Activated T-helper 2 cell treated with anti-CD3 and anti-CD28 coated beads, Interferon-gamma antibody, Interleukin-2, Interleukin-4, amounts not matched to agents 10 μg/mL and 5 μg/mL and 100 μg/mL, durations not matched to agents 14 hours and 24 hours and 36 hours (primary cell): ENCODE measurements at regions of chr5 and their contacts with region 1.

Region 1: DNA sequence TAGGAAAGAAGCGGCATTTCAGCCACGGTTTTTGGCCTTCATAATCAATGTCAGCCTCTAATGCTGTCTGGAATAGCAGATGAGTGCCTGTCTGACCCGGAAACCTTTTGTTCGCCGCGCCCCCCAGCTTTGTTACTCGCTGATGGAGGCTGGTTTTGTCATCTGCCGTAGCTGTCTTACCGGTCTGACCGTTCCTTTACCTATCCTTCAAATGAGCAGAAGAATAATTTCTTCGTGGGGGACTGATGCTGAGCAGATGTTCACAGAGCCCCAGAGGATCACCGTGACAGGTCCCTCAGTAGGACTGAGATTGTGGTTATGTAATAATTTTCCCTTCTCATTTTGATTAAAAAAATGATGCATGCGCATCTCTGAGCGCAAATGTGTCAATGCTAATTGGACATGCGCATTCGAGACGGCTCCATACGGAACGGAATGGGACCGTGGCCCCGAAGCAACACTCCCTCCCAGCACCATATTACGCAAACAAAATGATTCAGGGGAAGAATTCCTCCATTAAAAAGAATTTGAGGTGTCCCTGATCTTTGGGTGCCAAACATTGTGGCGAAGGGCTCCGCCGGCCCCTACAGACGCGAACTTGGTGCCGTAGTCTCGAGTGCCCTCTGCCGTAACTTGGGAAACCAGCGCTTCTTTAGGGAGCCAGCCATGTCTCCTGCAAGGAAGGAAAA is 27.6 kb downstream of the TLX3 start:
- DNase-seq: no peak
- H3K4me3 Mint-ChIP-seq: peak overlapping the region; percentile 10
- H3K27ac Mint-ChIP-seq: no peak overlapping the region
- H3K4me1 Mint-ChIP-seq: no peaks in the 10 kb centered on the region
- H3K27me3 Mint-ChIP-seq: peaks cover 40% of the 10 kb centered on the region

Region 2: DNA sequence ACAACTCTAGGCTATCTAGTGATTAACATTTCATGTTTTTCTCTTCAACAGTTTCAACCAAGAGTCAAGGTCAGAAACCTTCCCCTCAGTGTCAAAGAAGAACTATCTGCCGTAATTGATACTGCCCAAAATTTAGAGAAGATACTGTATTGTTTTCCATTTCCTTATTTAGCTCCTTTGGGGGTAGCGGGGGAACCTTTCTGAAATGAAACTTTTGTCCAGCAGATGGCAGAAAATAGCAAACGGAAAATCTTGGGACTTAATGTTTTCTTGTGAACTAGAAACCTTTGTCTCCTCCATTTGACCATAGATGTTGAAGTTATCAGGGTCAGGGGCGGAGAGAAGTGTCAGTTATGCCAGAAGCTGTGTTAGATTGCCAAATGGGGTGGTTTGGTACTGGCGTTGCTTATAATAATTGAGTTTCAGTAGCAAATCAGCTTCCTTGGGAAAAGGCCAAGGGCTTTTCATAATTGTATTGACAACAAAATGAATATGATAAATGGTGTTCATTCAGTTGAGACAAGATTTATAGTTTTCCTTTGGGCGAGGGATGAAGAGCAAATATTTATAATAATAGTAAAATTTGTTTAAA is 129.3 kb before region 1 on chr5:
- intact Hi-C with region 1: loop called (anchors 2 kb)
- DNase-seq: no peak
- H3K4me3 Mint-ChIP-seq: no peak overlapping the region
- H3K27ac Mint-ChIP-seq: no peak overlapping the region
- H3K4me1 Mint-ChIP-seq: no peaks in the 10 kb centered on the region
- H3K27me3 Mint-ChIP-seq: peaks cover 11% of the 10 kb centered on the region

Region 3: GRCh38 chr5:171318026-171318425 is 18.6 kb before region 1 on chr5:
- intact Hi-C with region 1: loop called (anchors 2 kb)
- DNase-seq: no peak
- H3K4me3 Mint-ChIP-seq: no peak overlapping the region
- H3K27ac Mint-ChIP-seq: no peak overlapping the region
- H3K4me1 Mint-ChIP-seq: peaks cover 1% of the 10 kb centered on the region
- H3K27me3 Mint-ChIP-seq: peaks cover 78% of the 10 kb centered on the region

Region 4: GRCh38 chr5:172028167-172028566 is 691.5 kb after region 1 on chr5:
- intact Hi-C with region 1: no loop called
- DNase-seq: no peak
- H3K4me3 Mint-ChIP-seq: no peak overlapping the region
- H3K27ac Mint-ChIP-seq: no peak overlapping the region
- H3K4me1 Mint-ChIP-seq: no peaks in the 10 kb centered on the region
- H3K27me3 Mint-ChIP-seq: peaks cover 8% of the 10 kb centered on the region